HEK293 (cell line): ENCODE measurements at regions of chr14 and their contacts with region 1.

Region 1: DNA sequence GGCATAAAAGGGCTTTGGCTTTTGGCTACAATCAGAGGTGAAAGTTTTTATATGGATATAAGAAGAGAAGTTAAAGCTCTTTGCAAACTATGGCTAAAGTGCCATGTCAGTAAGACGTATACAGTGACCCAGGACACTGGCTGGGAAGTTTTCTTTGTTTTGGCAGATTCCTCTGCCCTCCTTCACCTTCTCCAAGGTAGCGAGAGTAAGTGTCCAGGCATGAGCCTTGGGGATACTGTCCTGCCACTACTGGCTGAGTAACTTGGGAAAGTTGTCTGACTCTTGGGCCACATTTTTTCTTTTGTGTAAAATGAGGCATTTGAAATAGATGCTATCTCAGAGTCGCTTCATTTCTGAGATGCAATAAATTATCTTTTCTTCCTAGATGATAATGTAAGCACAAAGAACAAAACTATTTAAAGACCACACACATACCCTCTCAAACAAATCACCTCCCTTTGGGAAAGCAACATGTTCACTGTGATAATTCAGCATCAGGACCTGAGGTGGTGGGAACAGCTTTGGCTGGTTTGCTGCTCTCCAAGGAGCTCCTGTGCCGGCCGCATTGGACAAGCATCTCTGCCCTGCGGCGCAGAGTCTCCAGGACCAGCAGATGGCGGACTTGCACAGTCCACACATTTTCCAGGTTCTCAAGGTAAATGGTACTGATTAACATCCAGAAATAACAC is 106.3 kb downstream of the PTCSC3 start:
- H3K4me3 ChIP-seq: no peak overlapping the region
- H3K27ac ChIP-seq: no peak overlapping the region
- H3K4me1 ChIP-seq: 0 out of 2 replicates have a peak, but pooled peaks cover 3% of the 10 kb centered on the region
- CTCF ChIP-seq: peak; percentile 58; the same call in 1 of the 2 replicates

Region 2: GRCh38 chr14:35959835-35960234 is 110.3 kb before region 1 on chr14:
- CTCF ChIA-PET with region 1: interaction called, 13 read pairs
- POLR2A ChIA-PET with region 1: no interaction called
- H3K4me3 ChIP-seq: no peak overlapping the region
- H3K27ac ChIP-seq: no peak overlapping the region
- H3K4me1 ChIP-seq: peaks cover 9% of the 10 kb centered on the region
- CTCF ChIP-seq: no peak

Region 3: DNA sequence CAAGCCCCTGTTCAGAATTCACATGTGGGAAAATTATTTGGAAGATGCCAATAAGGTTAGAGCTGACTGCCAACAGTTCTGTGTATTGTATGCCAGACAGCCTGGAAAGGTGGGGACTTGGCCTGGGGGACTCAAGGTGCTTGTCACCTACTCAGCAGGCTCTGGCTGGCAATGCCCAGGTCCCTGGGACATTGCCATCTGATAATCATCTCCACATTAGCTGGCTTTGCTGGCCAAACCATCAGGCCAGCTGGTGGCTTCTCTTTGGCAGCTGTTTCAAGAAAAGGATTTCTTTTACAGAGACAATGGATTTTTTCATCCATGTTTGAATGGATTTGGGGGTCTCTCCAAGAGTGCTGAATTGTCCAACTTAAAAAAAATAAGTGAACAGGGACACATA is 78.8 kb before region 1 on chr14:
- CTCF ChIA-PET with region 1: no interaction called
- POLR2A ChIA-PET with region 1: no interaction called
- H3K4me3 ChIP-seq: no peak overlapping the region
- H3K27ac ChIP-seq: no peak overlapping the region
- H3K4me1 ChIP-seq: no peaks in the 10 kb centered on the region
- CTCF ChIP-seq: no peak

Region 4: GRCh38 chr14:36059531-36059930 is 10.6 kb before region 1 on chr14:
- CTCF ChIA-PET with region 1: interaction called, 21 read pairs
- POLR2A ChIA-PET with region 1: no interaction called
- H3K4me3 ChIP-seq: no peak overlapping the region
- H3K27ac ChIP-seq: no peak overlapping the region
- H3K4me1 ChIP-seq: peaks cover 12% of the 10 kb centered on the region
- CTCF ChIP-seq: no peak

Region 5: GRCh38 chr14:36105401-36105800 is 35.2 kb after region 1 on chr14:
- CTCF ChIA-PET with region 1: interaction called, 13 read pairs
- POLR2A ChIA-PET with region 1: no interaction called
- H3K4me3 ChIP-seq: no peak overlapping the region
- H3K27ac ChIP-seq: no peak overlapping the region
- H3K4me1 ChIP-seq: no peaks in the 10 kb centered on the region
- CTCF ChIP-seq: peak; percentile 41; the same call in 1 of the 2 replicates

Region 6: DNA sequence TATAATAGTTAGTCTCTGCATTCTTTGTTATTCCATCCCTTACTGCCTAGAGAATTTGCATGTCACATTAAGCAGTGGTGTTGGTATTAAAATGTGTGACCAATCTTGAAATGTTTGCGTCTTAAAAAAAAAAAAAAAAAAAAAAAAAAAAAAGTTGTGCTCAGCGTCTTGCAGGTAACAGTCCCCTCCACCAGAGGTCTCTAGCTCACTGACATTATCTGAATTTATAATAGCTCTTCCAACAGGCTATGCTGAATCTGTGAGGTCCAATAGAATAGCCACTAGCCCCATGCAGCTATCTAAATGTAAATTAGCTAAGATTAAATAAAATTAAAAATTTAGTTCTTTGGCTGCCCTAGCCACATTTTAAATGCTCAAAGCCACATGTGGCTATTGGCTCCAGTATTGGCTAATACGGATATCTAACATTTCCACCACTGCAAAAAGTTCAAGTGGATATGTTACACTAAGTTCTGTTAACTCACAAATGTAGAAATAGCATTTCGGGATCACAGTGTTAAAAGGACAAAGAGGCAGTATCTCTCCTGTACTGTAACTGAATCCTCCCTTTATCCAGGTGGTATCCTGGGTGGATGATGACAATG is 483.6 kb after region 1 on chr14:
- CTCF ChIA-PET with region 1: interaction called, 67 read pairs
- POLR2A ChIA-PET with region 1: no interaction called
- H3K4me3 ChIP-seq: no peak overlapping the region
- H3K27ac ChIP-seq: no peak overlapping the region
- H3K4me1 ChIP-seq: no peaks in the 10 kb centered on the region
- CTCF ChIP-seq: peak; percentile 44; the same call in 1 of the 2 replicates